CD4-positive, alpha-beta T cell (primary cell): ENCODE measurements at regions of chr14 and their contacts with region 1.

Region 1: GRCh38 chr14:59199205-59199604 is 10.7 kb downstream of the DAAM1 start:
- DNase-seq: no peak
- ATAC-seq: no peak
- H3K4me3 ChIP-seq: no peak overlapping the region
- H3K4me3 Mint-ChIP-seq: no peak overlapping the region
- H3K27ac ChIP-seq: no peak overlapping the region
- H3K27ac Mint-ChIP-seq: no peak overlapping the region
- H3K4me1 ChIP-seq: peaks cover 3% of the 10 kb centered on the region
- H3K4me1 Mint-ChIP-seq: peaks cover 6% of the 10 kb centered on the region
- H3K27me3 ChIP-seq: no peaks in the 10 kb centered on the region
- H3K27me3 Mint-ChIP-seq: no peaks in the 10 kb centered on the region
- CTCF ChIP-seq: no peak

Region 2: DNA sequence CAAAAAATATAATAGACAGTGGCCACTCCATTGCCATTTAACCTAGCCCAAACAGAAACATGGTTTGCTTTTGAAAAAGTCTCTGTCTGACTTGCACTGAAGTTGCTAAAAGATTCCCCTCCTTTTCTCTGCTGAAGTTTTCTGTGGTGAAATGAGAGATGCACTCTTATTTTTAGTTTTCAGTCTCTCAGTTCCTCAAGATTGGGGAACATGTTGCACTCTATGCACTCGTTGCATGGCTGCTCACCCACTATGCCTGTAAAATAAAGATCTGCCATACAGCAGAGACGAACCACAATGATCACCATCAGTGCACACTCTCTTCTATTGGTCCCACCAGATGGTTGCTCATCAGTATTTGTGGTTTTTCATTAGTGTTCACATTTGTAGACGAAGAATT is 23.8 kb before region 1 on chr14:
- CTCF ChIA-PET with region 1: no interaction called
- POLR2A ChIA-PET with region 1: no interaction called
- intact Hi-C with region 1: loop called in 1 of 2 experiments (anchors 2 kb)
- DNase-seq: no peak
- ATAC-seq: no peak
- H3K4me3 ChIP-seq: no peak overlapping the region
- H3K4me3 Mint-ChIP-seq: no peak overlapping the region
- H3K27ac ChIP-seq: no peak overlapping the region
- H3K27ac Mint-ChIP-seq: no peak overlapping the region
- H3K4me1 ChIP-seq: no peaks in the 10 kb centered on the region
- H3K4me1 Mint-ChIP-seq: no peaks in the 10 kb centered on the region
- H3K27me3 ChIP-seq: peaks cover 0 to 10% of the 10 kb centered on the region in 2 experiments
- H3K27me3 Mint-ChIP-seq: peaks cover 27% of the 10 kb centered on the region
- CTCF ChIP-seq: no peak

Region 3: DNA sequence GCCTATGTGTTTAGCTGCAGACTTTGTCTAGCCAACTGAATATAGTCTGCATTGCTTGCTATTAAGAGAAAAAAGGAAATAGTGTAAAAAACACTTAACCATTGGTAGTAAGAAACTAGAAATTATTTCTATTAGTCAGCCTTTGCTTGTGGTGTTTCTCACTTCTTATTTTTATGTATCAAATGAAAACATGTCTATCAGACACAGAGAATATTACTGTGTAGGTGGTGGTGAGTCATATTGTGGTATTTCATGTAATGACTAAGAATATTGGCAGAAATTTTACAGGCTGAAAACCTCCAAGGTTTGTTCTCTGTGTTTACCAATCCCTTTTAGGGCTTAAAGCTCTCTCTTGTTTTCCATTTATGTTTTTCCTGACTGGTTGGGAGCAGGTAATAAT is 76.4 kb after region 1 on chr14:
- CTCF ChIA-PET with region 1: no interaction called
- POLR2A ChIA-PET with region 1: no interaction called
- intact Hi-C with region 1: no loop called
- DNase-seq: peak in 1 of 14 experiments; percentile 13
- ATAC-seq: no peak
- H3K4me3 ChIP-seq: no peak overlapping the region
- H3K4me3 Mint-ChIP-seq: no peak overlapping the region
- H3K27ac ChIP-seq: no peak overlapping the region
- H3K27ac Mint-ChIP-seq: no peak overlapping the region
- H3K4me1 ChIP-seq: no peaks in the 10 kb centered on the region
- H3K4me1 Mint-ChIP-seq: peaks cover 7% of the 10 kb centered on the region
- H3K27me3 ChIP-seq: no peaks in the 10 kb centered on the region
- H3K27me3 Mint-ChIP-seq: no peaks in the 10 kb centered on the region
- CTCF ChIP-seq: no peak

Region 4: DNA sequence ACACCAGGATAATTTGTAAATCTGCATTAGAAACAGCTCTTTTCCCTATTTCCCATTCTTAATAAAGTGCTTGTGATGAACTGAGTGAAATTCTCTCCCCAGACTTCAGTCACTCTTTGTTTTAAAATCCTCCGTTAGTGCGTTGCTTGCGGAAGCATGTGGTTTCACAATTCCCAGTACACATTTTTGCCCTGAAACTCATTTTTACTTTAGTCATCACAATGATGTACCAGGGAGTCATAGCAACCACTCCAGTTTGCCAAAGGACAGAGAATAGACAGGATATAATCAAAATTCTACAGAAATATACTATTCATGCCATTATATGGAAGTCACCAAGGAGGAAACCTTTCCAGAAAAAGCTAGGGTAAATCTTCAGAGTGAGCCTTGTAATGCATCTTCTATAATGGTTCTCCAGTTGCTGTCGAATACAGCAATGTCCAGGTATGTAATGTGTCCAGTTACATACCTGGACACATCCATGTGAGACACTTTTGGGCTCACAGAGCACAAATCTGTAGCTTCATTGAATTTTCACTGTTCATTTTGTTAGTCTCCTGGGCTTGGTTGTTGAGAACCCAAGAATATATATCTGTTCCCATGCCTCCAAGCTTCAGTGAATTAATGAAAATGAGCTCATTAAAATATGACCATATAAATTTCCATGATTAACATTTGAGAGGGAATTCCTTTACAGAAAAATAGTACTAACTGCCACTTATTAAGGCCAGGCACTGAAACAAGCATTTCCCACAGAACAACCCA is 208.2 kb after region 1 on chr14:
- CTCF ChIA-PET with region 1: no interaction called
- POLR2A ChIA-PET with region 1: no interaction called
- intact Hi-C with region 1: no loop called
- DNase-seq: no peak
- ATAC-seq: no peak
- H3K4me3 ChIP-seq: no peak overlapping the region
- H3K4me3 Mint-ChIP-seq: no peak overlapping the region
- H3K27ac ChIP-seq: no peak overlapping the region
- H3K27ac Mint-ChIP-seq: no peak overlapping the region
- H3K4me1 ChIP-seq: no peaks in the 10 kb centered on the region
- H3K4me1 Mint-ChIP-seq: no peaks in the 10 kb centered on the region
- H3K27me3 ChIP-seq: peaks cover 5 to 19% of the 10 kb centered on the region in 2 experiments
- H3K27me3 Mint-ChIP-seq: peaks cover 12% of the 10 kb centered on the region
- CTCF ChIP-seq: no peak

Region 5: GRCh38 chr14:59787045-59787674 is 588.0 kb after region 1 on chr14:
- CTCF ChIA-PET with region 1: no interaction called
- POLR2A ChIA-PET with region 1: no interaction called
- intact Hi-C with region 1: no loop called
- DNase-seq: no peak
- ATAC-seq: no peak
- H3K4me3 ChIP-seq: no peak overlapping the region
- H3K4me3 Mint-ChIP-seq: no peak overlapping the region
- H3K27ac ChIP-seq: no peak overlapping the region
- H3K27ac Mint-ChIP-seq: no peak overlapping the region
- H3K4me1 ChIP-seq: no peaks in the 10 kb centered on the region
- H3K4me1 Mint-ChIP-seq: no peaks in the 10 kb centered on the region
- H3K27me3 ChIP-seq: no peaks in the 10 kb centered on the region
- H3K27me3 Mint-ChIP-seq: peaks cover 7% of the 10 kb centered on the region
- CTCF ChIP-seq: no peak